Mammary epithelial cell (primary cell): ENCODE measurements at regions of chr12 and their contacts with region 1.

Region 1: DNA sequence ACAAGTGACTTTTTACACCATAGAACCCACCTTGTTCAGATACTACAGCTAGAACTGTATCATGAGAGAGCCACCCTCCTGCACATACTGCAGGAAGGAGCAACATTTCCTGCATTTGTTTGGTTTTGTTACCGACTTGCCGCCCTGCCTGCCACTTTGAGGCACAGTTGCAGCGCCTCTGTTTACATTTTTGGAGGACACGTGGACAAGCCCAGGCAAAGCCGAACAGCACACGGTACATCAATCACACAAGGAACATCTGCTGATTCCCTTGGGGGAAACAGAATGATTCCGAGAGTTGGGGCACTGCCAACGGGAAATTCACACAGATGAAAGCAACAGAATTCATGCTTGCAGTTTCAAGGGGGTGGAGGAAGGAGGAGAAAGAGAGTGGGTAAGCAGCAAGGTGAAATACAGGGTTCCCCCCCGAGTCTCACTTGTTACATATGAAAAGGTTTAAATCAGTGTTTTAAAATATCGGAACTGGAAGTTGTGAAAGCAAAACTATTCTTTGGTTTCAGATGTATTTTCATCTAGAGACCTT is 110.7 kb downstream of the BTG1 start:
- DNase-seq: peak; percentile 99
- H3K4me3 ChIP-seq: peak overlapping the region in 2 of 3 experiments; percentile 2 to 10
- H3K27ac ChIP-seq: peak overlapping the region; percentile 68
- H3K4me1 ChIP-seq: peaks cover 33% of the 10 kb centered on the region
- H3K27me3 ChIP-seq: no peaks in the 10 kb centered on the region
- CTCF ChIP-seq: no peak

Region 2: GRCh38 chr12:91951571-91951970 is 83.4 kb before region 1 on chr12:
- CTCF ChIA-PET with region 1: no interaction called
- dilution Hi-C with region 1: loop called (anchors 5 kb)
- in situ Hi-C with region 1: no loop called
- intact Hi-C with region 1: no loop called
- DNase-seq: peak; percentile 60
- H3K4me3 ChIP-seq: no peak overlapping the region
- H3K27ac ChIP-seq: no peak overlapping the region
- H3K4me1 ChIP-seq: no peaks in the 10 kb centered on the region
- H3K27me3 ChIP-seq: no peaks in the 10 kb centered on the region
- CTCF ChIP-seq: no peak

Region 3: DNA sequence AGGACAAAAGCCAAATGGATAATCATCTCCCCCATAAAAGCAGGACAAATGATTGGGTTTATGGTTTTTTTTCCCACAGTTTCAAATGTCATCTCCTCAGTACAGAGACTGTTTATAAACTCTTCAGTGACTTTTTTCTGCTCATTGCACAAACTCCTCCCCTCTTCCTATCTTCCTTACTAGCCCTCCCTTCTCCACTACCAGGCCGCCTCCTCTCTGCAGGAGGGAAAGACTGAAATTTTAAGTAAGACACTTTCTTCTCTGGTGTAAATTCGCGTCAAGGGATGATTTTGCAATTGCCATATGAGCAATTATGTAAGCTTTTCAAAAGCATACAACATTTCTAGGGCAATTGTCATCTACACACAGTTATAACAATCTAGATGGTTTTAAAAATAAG is 73.7 kb after region 1 on chr12:
- CTCF ChIA-PET with region 1: no interaction called
- dilution Hi-C with region 1: loop called (anchors 5 kb)
- in situ Hi-C with region 1: no loop called
- intact Hi-C with region 1: no loop called
- DNase-seq: no peak
- H3K4me3 ChIP-seq: no peak overlapping the region
- H3K27ac ChIP-seq: no peak overlapping the region
- H3K4me1 ChIP-seq: peaks cover 4% of the 10 kb centered on the region
- H3K27me3 ChIP-seq: no peaks in the 10 kb centered on the region
- CTCF ChIP-seq: no peak

Region 4: GRCh38 chr12:92133795-92134637 is 99.1 kb after region 1 on chr12:
- CTCF ChIA-PET with region 1: no interaction called
- dilution Hi-C with region 1: no loop called
- in situ Hi-C with region 1: no loop called
- intact Hi-C with region 1: no loop called
- DNase-seq: no peak
- H3K4me3 ChIP-seq: no peak overlapping the region
- H3K27ac ChIP-seq: peak overlapping the region; percentile 54
- H3K4me1 ChIP-seq: peaks cover 53% of the 10 kb centered on the region
- H3K27me3 ChIP-seq: no peaks in the 10 kb centered on the region
- CTCF ChIP-seq: no peak